ENCODE measurements at regions of chr1 and their contacts with region 1.

Region 1: GRCh38 chr1:34162852-34163766 is 1.9 kb downstream of the CSMD2 start:
- DNase-seq: peak; percentile 79

Region 2: GRCh38 chr1:33633019-33633801 is 529.9 kb before region 1 on chr1:
- intact Hi-C with region 1: loop called (anchors 5 kb)
- DNase-seq: peak; percentile 91

Region 3: DNA sequence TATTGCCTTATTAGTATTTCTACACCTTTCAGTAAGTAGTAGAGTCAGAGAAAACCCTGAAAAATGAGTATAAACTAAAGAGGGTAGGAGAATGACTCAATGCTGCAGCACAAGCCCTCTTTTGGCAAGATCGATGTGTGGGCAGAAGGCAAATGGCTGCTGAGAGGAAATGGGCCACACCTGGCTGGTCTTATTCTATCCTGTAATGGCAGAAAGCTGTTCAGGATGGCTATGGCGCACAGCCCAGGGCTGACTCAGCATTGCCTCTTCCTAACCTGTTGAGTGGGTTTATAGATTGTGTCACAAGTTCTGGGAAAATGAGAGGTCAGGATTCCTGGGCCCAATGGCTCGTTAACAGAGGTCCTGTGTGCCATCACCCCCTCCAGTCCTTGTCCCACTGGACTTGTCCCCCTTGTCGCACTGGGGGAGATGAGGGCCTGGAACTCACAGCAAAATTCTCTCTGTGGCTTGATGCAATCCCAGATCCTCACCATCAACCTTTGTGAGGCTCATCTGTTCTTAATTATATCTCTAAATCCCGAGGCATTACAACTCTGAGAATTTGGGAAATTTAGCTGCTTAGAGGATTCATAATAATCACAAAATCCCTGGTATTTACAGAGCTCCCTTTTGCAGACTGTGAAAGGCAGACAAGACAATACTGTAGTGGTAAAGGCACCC is 286.0 kb before region 1 on chr1:
- intact Hi-C with region 1: loop called (anchors 5 kb)
- DNase-seq: peak; percentile 78

Region 4: GRCh38 chr1:33944027-33944426 is 219.1 kb before region 1 on chr1:
- intact Hi-C with region 1: no loop called
- DNase-seq: peak; percentile 10